Common myeloid progenitor, CD34-positive (primary cell): ENCODE measurements at regions of chr5 and their contacts with region 1.

Region 1: GRCh38 chr5:134648425-134649162 is at the start of gene SEC24A:
- DNase-seq: peak; percentile 93 to 96 (median 96)
- H3K4me3 ChIP-seq: peak within 1 kb of the TSS; percentile 60 to 99 (median 94)
- H3K27ac ChIP-seq: peak within 1 kb of the TSS; percentile 98
- H3K4me1 ChIP-seq: peaks cover 6 to 26% (median 15%) of the 10 kb centered on the region in 4 experiments
- H3K27me3 ChIP-seq: no peaks in the 10 kb centered on the region

Region 2: GRCh38 chr5:134603059-134603458 is 45.5 kb before region 1 on chr5:
- CTCF ChIA-PET with region 1: no interaction called
- POLR2A ChIA-PET with region 1: no interaction called
- DNase-seq: no peak
- H3K4me3 ChIP-seq: no peak overlapping the region
- H3K27ac ChIP-seq: no peak overlapping the region
- H3K4me1 ChIP-seq: no peaks in the 10 kb centered on the region
- H3K27me3 ChIP-seq: no peaks in the 10 kb centered on the region

Region 3: DNA sequence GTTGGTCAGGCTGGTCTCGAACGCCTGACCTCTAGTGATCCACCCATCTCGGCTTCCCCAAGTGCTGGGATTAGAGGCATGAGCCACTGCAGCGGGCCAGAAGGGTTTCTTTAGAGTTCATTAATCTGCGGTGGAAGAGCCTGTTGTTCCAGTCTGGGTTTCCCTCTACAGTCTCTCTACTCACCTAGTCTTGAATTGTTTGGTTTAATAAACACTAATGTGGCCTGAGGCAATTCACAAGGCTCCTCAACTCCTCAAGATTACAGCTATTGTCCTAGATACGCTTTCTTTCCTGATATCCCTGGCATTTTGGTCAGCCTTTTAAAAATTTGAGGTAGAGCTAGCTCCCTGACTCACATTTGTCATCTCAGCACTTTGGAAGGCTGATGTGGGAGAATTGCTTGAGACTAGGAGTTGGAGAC is 11.4 kb before region 1 on chr5:
- CTCF ChIA-PET with region 1: interaction called, 8 read pairs
- POLR2A ChIA-PET with region 1: interaction called, 12 read pairs
- DNase-seq: no peak
- H3K4me3 ChIP-seq: no peak overlapping the region
- H3K27ac ChIP-seq: no peak overlapping the region
- H3K4me1 ChIP-seq: peaks cover 0 to 2% (median under 1%) of the 10 kb centered on the region in 4 experiments
- H3K27me3 ChIP-seq: no peaks in the 10 kb centered on the region